ENCODE measurements at regions of chr19 and their contacts with region 1.

Region 1: DNA sequence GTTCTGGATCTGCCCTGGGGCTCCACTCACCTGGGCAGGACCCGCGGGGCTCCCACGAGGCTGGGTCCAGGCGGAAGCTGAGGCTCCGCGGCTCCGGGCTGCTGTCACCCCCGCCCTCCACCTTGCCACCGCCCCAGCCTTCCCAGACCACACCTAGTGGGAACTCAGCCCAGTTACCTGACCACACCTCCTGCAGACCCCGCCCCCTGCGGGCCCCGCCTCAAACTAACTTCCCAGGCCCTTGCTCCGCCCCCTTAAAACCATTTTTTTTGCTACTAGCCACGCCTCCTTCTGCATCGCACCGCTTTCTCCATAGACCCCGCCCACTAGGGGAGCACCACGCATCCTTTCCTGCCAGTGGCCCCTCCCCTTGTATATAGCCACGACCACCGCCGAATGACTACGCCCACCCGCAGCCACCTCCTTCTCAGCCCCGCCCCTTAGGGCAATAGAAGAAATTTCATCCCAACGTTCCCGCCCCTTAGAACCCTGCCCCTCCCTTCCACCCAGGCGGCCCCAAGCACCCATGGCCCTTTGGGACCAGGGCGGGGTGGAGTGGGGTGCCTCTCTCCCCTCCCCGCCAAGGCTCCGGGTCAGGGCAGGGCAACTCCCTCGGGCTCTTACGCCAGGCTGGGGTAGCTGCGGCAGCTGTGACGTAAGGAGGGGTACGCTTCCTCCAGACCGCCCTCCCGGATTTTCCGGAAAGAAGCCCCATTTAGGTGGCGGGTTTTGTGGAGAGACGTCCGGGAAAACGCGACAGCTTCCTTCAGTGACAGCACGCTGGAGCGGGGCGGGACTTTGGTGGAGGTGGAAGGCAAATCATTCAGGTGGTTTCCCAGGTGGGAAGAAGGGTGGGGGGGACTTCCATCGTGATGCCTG is at the start of gene SH2D3A:
- DNase-seq: peak; percentile 79 to 97
- ATAC-seq: peak; percentile 60 to 80 (median 63)
- H3K4me3 ChIP-seq: peak within 1 kb of the TSS; percentile 65
- H3K4me3 Mint-ChIP-seq: peak within 1 kb of the TSS; percentile 90
- H3K27ac ChIP-seq: peak within 1 kb of the TSS; percentile 96
- H3K27ac Mint-ChIP-seq: peak within 1 kb of the TSS; percentile 85 to 96
- H3K4me1 ChIP-seq: peaks cover 43% of the 10 kb centered on the region
- H3K4me1 Mint-ChIP-seq: peaks cover 34 to 44% of the 10 kb centered on the region in 2 donors
- H3K27me3 ChIP-seq: no peaks in the 10 kb centered on the region
- H3K27me3 Mint-ChIP-seq: no peaks in the 10 kb centered on the region
- CTCF ChIP-seq: no peak
- total RNA-seq, gene SH2D3A: 14.6 to 20.1 (median 15.3) TPM

Region 2: GRCh38 chr19:6260912-6261650 is 506.5 kb before region 1 on chr19:
- intact Hi-C with region 1: no loop called
- DNase-seq: peak; percentile 45 to 59
- ATAC-seq: peak in 2 of 3 donors; percentile 51 to 81
- H3K4me3 ChIP-seq: no peak overlapping the region
- H3K4me3 Mint-ChIP-seq: no peak overlapping the region
- H3K27ac ChIP-seq: no peak overlapping the region
- H3K27ac Mint-ChIP-seq: peak overlapping the region in 1 of 2 donors; percentile 73
- H3K4me1 ChIP-seq: peaks cover 21% of the 10 kb centered on the region
- H3K4me1 Mint-ChIP-seq: peaks cover 0 to 27% of the 10 kb centered on the region in 2 donors
- H3K27me3 ChIP-seq: no peaks in the 10 kb centered on the region
- H3K27me3 Mint-ChIP-seq: no peaks in the 10 kb centered on the region
- CTCF ChIP-seq: peak; percentile 56

Region 3: DNA sequence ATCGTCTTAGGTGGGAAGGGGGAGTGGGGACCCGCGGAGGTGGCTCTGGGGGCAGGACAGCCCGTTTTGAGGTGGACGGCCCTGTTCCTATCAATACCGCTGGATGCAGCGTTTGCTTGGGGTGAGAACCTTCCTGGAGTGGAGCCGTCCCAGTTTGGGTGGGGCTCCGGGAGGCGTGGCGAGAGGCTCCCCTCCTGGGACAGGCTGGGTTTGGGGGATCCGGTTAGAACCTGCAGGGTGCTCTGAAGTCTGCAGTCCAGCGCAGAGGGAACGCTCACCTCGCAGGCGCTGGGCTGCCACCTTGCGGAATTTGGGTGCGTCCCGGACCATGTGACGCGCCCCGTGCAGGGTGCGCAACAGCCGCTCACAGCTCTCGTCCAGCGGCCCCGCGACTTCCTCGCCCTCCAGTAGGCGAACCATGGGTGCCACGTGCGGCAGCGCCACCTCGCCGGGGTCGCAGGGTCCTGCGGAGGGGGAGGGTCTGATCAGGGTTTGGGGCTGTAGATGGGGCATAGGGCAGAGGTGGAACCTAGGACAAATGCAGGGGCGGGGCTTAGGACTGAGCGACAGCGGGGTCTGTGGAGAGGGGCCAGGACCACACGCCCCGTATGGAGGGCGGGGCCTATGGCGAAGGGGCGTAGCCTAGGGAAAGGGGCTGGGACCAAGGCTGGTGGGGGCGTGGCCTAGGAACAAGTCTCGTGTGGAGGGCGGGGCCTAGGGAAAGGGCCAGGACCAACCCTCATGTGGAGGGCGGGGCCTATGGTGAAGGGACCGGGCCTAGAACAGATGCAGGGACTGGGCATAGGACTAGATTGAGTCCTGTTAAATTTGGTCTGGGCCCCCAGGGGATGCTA is 14.2 kb before region 1 on chr19:
- intact Hi-C with region 1: loop called (anchors 1 kb)
- DNase-seq: peak; percentile 66 to 89
- ATAC-seq: peak; percentile 91 to 92 (median 92)
- H3K4me3 ChIP-seq: peak overlapping the region; percentile 41
- H3K4me3 Mint-ChIP-seq: peak overlapping the region; percentile 77
- H3K27ac ChIP-seq: peak overlapping the region; percentile 27
- H3K27ac Mint-ChIP-seq: peak overlapping the region; percentile 71 to 78
- H3K4me1 ChIP-seq: peaks cover 13% of the 10 kb centered on the region
- H3K4me1 Mint-ChIP-seq: peaks cover 6 to 23% of the 10 kb centered on the region in 2 donors
- H3K27me3 ChIP-seq: no peaks in the 10 kb centered on the region
- H3K27me3 Mint-ChIP-seq: no peaks in the 10 kb centered on the region
- CTCF ChIP-seq: peak; percentile 12

Region 4: GRCh38 chr19:6868351-6868750 is 100.8 kb after region 1 on chr19:
- intact Hi-C with region 1: no loop called
- DNase-seq: peak in 1 of 2 donors; percentile 24
- ATAC-seq: peak in 1 of 3 donors; percentile 40
- H3K4me3 ChIP-seq: no peak overlapping the region
- H3K4me3 Mint-ChIP-seq: no peak overlapping the region
- H3K27ac ChIP-seq: no peak overlapping the region
- H3K27ac Mint-ChIP-seq: no peak overlapping the region
- H3K4me1 ChIP-seq: peaks cover 2% of the 10 kb centered on the region
- H3K4me1 Mint-ChIP-seq: peaks cover 4 to 5% of the 10 kb centered on the region in 2 donors
- H3K27me3 ChIP-seq: no peaks in the 10 kb centered on the region
- H3K27me3 Mint-ChIP-seq: no peaks in the 10 kb centered on the region
- CTCF ChIP-seq: no peak

Region 5: DNA sequence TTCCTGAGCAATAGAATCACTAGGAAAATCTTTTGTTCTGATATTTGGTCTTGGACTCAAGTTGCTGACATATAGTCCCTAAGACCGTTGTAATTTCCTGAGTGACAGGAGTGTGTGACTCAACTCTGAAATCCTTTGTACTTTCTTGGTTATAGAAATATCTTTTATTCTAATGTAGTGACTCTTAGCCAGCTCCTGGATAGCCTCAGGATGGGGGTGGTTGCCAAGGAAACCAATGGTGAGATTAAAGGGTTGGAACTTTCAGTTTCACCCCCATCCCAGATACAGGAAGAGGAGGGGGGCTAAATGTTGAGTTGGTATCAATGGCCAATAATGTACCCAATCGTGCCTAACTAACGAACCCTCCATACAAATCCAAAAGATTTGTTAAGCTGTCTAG is 211.8 kb after region 1 on chr19:
- intact Hi-C with region 1: no loop called
- DNase-seq: no peak
- ATAC-seq: no peak
- H3K4me3 ChIP-seq: no peak overlapping the region
- H3K4me3 Mint-ChIP-seq: no peak overlapping the region
- H3K27ac ChIP-seq: no peak overlapping the region
- H3K27ac Mint-ChIP-seq: no peak overlapping the region
- H3K4me1 ChIP-seq: no peaks in the 10 kb centered on the region
- H3K4me1 Mint-ChIP-seq: no peaks in the 10 kb centered on the region
- H3K27me3 ChIP-seq: no peaks in the 10 kb centered on the region
- H3K27me3 Mint-ChIP-seq: peaks cover 9 to 17% of the 10 kb centered on the region in 2 donors
- CTCF ChIP-seq: no peak

Measured in natural killer cell (primary cell).